Cardiac septum (tissue), 1 donor: ENCODE measurements at regions of chr3 and their contacts with region 1.

Region 1: GRCh38 chr3:136196401-136197158 is 445 bp upstream of the MSL2 start:
- DNase-seq: peak; percentile 99

Region 2: DNA sequence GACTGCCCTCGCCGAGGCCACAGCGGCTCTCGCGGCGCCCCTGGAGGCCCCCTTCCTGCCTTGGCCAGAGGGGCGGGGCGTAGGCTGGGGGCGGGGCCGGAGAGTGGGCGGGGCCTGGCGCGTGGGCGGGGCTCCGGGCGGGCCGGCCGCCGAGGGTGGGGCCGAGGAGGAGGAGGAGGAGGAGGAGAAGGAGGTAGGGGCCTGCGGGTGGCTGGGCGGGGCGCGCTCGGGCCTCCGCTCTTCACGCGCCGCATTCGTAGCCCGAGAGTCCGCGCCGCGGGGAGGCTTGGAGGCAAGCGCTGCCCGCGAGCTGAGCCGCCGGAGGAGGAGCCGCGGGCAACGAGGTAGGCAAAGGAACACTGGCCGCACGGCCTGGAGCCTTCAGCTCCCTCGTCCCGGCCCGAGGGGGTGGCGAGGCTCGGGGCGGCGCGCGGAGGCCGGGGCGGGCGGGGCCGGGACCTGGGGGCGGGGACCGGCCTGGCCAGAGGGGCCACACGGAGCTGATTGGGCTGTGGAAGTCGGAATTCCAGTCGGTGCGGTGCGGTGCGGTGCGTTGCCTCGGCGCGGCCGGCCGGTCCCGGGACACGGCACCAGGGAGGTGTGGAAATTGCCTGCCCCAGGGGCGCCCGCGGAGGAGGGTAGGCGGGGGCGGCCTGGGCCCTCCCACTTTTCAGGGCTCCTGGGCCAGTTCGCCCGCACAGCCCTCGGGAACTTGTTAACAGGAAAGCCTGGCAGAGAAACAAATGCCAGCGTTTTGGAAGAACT is 230.9 kb before region 1 on chr3 and contains the start of gene PPP2R3A:
- intact Hi-C with region 1: loop called (anchors 5 kb)
- DNase-seq: peak; percentile 93
- total RNA-seq, gene PPP2R3A: 82.8 TPM

Region 3: GRCh38 chr3:136075218-136075808 is 121.3 kb before region 1 on chr3:
- intact Hi-C with region 1: loop called (anchors 5 kb)
- DNase-seq: peak; percentile 81

Region 4: DNA sequence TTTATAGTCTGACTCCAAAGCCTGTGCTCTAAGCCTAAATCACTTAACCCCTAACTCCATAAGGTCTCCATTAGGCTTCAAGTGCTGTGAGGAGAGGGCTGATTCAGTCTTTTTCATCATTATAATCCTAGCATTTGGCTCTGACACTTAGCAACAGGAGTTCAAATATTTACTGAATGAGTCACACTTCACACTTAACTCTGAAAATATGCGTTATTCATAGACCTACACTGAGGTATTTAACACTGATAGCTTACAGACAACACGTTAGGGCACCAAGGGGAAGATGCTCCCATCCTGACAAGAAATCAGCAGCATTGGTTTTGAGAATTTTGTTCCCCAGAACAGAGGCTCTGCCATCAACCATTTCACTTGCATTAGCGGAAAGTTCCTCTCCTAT is 54.0 kb before region 1 on chr3:
- intact Hi-C with region 1: loop called (anchors 10 kb)
- DNase-seq: no peak

Region 5: DNA sequence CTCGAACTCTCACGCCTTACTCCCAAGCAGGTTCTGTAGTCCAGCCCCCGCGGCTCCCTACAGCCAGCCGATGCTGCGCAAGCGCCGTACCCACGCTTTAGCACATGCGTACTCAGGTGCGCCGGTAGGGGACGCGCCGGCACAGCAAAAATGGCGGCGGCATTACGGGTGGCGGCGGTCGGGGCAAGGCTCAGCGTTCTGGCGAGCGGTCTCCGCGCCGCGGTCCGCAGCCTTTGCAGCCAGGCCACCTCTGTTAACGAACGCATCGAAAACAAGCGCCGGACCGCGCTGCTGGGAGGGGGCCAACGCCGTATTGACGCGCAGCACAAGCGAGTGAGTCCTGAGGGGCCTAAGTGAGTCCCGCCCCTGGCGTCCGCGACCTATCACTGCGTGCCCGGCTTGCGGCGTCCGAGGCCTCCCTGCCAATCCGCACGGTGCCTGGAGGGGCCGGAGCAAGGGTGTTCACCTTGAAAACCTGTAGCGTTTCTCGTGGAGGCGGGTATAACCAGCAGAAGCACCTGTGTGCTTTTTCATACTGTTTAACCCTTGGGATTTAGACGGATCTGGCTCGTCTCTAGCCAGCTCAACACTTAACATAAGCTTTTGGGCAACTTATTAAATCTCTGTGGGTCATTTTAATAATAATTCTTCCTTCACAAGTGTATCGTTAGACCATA is 53.8 kb after region 1 on chr3 and contains the start of gene PCCB:
- intact Hi-C with region 1: loop called (anchors 1 kb)
- DNase-seq: peak; percentile 97
- total RNA-seq, gene PCCB: 91.3 TPM

Region 6: GRCh38 chr3:136861890-136862616 is 665.5 kb after region 1 on chr3 and contains the start of gene NCK1:
- intact Hi-C with region 1: loop called (anchors 5 kb)
- DNase-seq: peak; percentile 99
- total RNA-seq, gene NCK1: 22.1 TPM